ENCODE measurements at regions of chr10 and their contacts with region 1.

Region 1: DNA sequence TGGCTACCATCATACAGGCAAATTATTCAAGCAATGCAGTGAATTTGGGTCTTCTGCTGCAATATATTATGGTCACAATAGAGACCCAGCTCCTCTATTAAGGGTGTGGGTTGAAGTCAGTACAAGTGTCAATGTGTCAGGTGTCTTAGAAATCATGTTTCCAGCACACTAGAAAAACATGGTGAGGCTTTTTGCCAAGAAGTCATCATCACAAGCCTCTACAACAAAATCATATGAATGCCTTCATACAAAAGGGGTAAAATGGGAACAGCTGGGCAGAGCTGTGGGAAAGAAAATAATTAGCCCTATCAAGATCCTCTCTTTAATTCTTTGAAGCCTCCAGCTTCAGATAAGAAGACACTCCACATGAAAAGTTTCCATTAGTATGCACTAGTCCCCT is 37.2 kb downstream of the FAM13C start:
- DNase-seq: no peak
- ATAC-seq: no peak
- H3K4me3 ChIP-seq: no peak overlapping the region
- H3K27ac ChIP-seq: no peak overlapping the region
- H3K4me1 ChIP-seq: peaks cover 6 to 9% of the 10 kb centered on the region in 2 donors
- H3K27me3 ChIP-seq: no peaks in the 10 kb centered on the region

Region 2: GRCh38 chr10:59382831-59383295 is 57.7 kb after region 1 on chr10:
- intact Hi-C with region 1: loop called in 1 of 2 experiments (anchors 5 kb)
- DNase-seq: no peak
- ATAC-seq: peak; percentile 69
- H3K4me3 ChIP-seq: no peak overlapping the region
- H3K27ac ChIP-seq: peak overlapping the region; percentile 57 to 87
- H3K4me1 ChIP-seq: peaks cover 0 to 3% of the 10 kb centered on the region in 2 donors
- H3K27me3 ChIP-seq: no peaks in the 10 kb centered on the region